HepG2 (cell line): ENCODE measurements at regions of chr17 and their contacts with region 1.

Region 1: DNA sequence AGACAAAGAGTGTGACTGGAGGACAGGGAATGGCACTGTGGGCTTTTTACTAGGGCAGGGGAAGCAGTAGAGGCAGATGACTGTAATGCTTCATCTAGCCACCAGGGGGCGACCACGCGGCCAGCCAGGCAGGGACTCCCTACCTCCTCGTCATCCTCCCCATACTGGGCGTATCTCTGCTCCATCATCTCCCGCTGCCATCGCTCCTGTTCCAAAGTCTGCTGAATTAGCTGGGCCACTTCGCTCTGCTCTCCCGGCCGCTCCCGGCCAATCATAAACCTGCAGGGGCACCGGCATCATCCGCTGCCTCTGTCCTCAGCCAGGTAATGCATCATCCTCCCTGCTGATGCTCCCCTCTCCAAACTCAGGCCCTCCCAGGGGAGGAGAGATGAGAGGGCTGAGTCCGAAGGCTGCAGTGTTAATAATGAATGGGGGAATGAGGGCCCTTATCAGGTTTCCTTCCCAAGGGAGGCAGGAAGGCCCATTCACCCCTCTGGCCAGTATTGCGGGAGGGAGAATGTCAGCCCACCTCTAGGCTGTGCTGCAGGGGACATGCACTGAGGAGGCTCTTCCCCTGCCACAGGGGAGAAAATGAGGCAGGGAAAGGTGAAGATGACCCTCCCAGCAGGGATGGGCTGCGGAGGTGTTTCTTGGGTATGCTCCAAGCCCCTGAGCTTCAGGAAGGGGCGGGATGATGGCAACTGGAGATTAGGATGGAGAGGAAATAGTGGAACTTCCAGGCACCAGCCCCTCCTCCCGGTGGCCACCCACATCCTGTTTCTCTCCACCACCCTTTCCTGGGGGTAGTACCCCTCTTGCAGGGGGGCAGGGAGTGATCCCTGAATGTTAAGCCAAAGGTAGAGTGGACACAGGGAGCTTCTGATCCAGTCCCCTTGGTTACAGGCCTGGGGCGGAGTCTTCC is 10.3 kb upstream of the SAMD14 start:
- DNase-seq: peak; percentile 77
- ATAC-seq: peak; percentile 83
- H3K4me3 ChIP-seq: no peak overlapping the region
- H3K27ac ChIP-seq: no peak overlapping the region
- H3K4me1 ChIP-seq: peaks cover 13% of the 10 kb centered on the region
- H3K27me3 ChIP-seq: no peaks in the 10 kb centered on the region
- CTCF ChIP-seq: peak; percentile 95
- EP300 ChIP-seq: no peak
- POLR2A ChIP-seq: no peak
- RAD21 ChIP-seq: peak; percentile 92

Region 2: GRCh38 chr17:50071692-50072486 is 68.3 kb before region 1 on chr17:
- CTCF ChIA-PET with region 1: no interaction called
- POLR2A ChIA-PET with region 1: no interaction called
- in situ Hi-C with region 1: no loop called
- intact Hi-C with region 1: no loop called
- DNase-seq: no peak
- ATAC-seq: no peak
- H3K4me3 ChIP-seq: no peak overlapping the region
- H3K27ac ChIP-seq: no peak overlapping the region
- H3K4me1 ChIP-seq: no peaks in the 10 kb centered on the region
- H3K27me3 ChIP-seq: peaks cover 0 to 20% of the 10 kb centered on the region in 2 experiments; a peak in 2 of 5 replicates
- CTCF ChIP-seq: no peak
- EP300 ChIP-seq: no peak
- POLR2A ChIP-seq: no peak
- RAD21 ChIP-seq: no peak

Region 3: GRCh38 chr17:50161023-50161910 is 21.1 kb after region 1 on chr17:
- CTCF ChIA-PET with region 1: interaction called, 32 read pairs
- POLR2A ChIA-PET with region 1: no interaction called
- in situ Hi-C with region 1: no loop called
- intact Hi-C with region 1: loop called (anchors 1 kb)
- DNase-seq: peak; percentile 78
- ATAC-seq: peak; percentile 95
- H3K4me3 ChIP-seq: peak overlapping the region; percentile 19 to 68 (median 42)
- H3K27ac ChIP-seq: no peak overlapping the region
- H3K4me1 ChIP-seq: peaks cover 15% of the 10 kb centered on the region
- H3K27me3 ChIP-seq: peaks cover 8 to 60% of the 10 kb centered on the region in 2 experiments; a peak in 3 of 5 replicates
- CTCF ChIP-seq: peak; percentile 100
- EP300 ChIP-seq: no peak
- POLR2A ChIP-seq: no peak
- RAD21 ChIP-seq: peak; percentile 97